Kidney (tissue), 22 donors: ENCODE measurements at regions of chr18 and their contacts with region 1.

Region 1: GRCh38 chr18:46281185-46282176 is 177.3 kb downstream of the HAUS1 start:
- DNase-seq: peak; percentile 79 to 86 (median 82)
- H3K4me3 ChIP-seq: no peak overlapping the region
- H3K27ac ChIP-seq: no peak overlapping the region
- H3K4me1 ChIP-seq: no peaks in the 10 kb centered on the region
- H3K27me3 ChIP-seq: no peaks in the 10 kb centered on the region
- CTCF ChIP-seq: peak; percentile 90

Region 2: DNA sequence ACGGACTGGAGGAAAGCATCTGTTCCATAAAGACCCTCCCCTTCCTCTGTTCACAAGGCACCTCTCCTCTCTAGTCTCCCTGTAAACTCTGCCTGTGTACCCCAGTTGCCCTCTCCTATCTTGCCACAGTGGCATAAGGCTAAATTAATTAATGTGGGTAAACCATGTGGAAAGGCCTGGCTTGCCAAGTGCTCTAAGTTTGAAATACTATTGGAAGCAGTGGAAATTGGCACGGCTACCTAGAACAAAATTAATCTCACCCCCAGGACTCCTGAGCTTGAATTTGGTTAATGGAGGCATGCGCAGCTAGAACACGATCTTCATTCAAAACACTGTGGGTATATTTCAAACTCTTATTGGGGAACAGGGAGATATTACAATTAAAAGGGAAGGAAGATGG is 685.4 kb before region 1 on chr18:
- intact Hi-C with region 1: no loop called
- DNase-seq: no peak
- H3K4me3 ChIP-seq: no peak overlapping the region
- H3K27ac ChIP-seq: no peak overlapping the region
- H3K4me1 ChIP-seq: no peaks in the 10 kb centered on the region
- H3K27me3 ChIP-seq: no peaks in the 10 kb centered on the region
- CTCF ChIP-seq: no peak

Region 3: DNA sequence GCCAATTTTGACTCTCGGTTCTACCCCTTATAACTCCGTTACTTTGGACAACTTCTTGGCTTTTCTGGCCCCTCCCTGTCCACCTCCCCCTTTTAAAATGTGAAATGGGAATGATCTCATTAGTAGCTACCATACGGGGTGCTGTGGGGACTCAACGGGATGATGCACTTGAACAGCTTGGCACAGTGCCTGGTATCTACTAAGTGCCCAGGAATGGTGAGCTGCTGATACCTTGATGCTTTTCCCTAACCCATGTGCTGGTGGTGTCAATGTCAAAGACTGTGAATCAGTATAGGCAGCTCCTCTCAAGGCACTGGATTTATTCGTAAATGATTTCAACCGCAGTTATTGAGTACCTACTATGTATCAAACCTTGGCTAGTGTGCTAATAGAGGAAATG is 171.3 kb after region 1 on chr18:
- intact Hi-C with region 1: no loop called
- DNase-seq: no peak
- H3K4me3 ChIP-seq: no peak overlapping the region
- H3K27ac ChIP-seq: no peak overlapping the region
- H3K4me1 ChIP-seq: no peaks in the 10 kb centered on the region
- H3K27me3 ChIP-seq: no peaks in the 10 kb centered on the region
- CTCF ChIP-seq: no peak

Region 4: GRCh38 chr18:46474487-46475389 is 193.3 kb after region 1 on chr18:
- intact Hi-C with region 1: loop called (anchors 5 kb)
- DNase-seq: peak in 2 of 5 donors; percentile 10 to 12
- H3K4me3 ChIP-seq: no peak overlapping the region
- H3K27ac ChIP-seq: no peak overlapping the region
- H3K4me1 ChIP-seq: no peaks in the 10 kb centered on the region
- H3K27me3 ChIP-seq: no peaks in the 10 kb centered on the region
- CTCF ChIP-seq: no peak